Activated T-helper 1 cell treated with anti-CD3 and anti-CD28 coated beads, Interleukin-12 subunit alpha, Interleukin-12 subunit beta, Interleukin-2, Interleukin-4 antibody, amounts not matched to agents 30 ng/mL and 10 ng/mL and 1 ng/mL, durations not matched to agents 14 hours and 24 hours and 36 hours (primary cell): ENCODE measurements at regions of chr6 and their contacts with region 1.

Region 1: DNA sequence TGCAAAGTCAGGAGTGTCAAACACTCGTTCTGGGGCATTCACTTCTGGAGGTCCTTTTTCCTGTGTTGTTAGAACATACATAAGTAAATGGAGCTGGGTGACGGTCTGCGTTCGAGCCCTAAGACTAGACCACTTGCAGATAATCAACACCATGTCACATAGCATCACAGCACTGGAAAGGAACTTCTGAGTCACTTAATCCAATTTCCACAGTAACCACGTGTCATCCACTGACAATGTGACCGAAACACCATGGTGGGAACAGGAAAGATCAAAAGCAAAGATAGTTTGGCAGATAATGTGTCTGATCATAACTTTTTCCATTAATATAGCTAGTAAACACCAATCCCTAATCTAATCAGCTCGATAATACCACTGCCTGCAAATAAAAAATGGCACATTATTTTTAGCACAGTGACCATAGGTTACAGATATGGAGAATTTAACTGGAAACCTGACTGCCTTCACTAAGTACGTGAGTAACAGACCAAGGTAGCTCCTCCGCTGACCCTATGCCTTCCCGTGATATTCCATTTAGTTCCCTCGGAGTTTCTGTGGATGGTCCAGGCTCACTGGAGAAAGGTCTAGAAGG is 34.8 kb downstream of the WRNIP1 start:
- DNase-seq: no peak
- H3K4me3 Mint-ChIP-seq: no peak overlapping the region
- H3K27ac Mint-ChIP-seq: peak overlapping the region; percentile 62
- H3K4me1 Mint-ChIP-seq: peaks cover 44% of the 10 kb centered on the region
- H3K27me3 Mint-ChIP-seq: no peaks in the 10 kb centered on the region

Region 2: DNA sequence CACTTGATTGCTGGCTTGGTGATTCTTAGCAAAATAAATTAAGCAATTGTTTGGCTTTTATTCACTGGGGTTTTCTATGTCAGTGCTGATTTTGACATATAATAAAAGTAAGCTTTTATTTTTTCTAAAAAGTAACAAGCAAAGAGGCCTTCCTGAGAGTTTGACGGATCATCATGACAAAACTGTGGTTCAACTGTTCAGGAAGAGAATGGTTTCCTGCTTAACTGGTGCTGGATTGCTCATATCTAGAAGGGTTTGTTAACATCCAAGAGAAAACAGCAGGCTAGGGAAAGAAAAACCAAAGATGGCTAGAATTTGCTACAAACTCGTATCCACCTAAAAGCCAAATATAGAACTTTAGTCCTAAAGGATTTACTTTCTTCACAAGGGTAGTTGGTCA is 20.4 kb after region 1 on chr6:
- intact Hi-C with region 1: loop called (anchors 2 kb)
- DNase-seq: no peak
- H3K4me3 Mint-ChIP-seq: peak overlapping the region; percentile 20
- H3K27ac Mint-ChIP-seq: peak overlapping the region; percentile 71
- H3K4me1 Mint-ChIP-seq: peaks cover 48% of the 10 kb centered on the region
- H3K27me3 Mint-ChIP-seq: no peaks in the 10 kb centered on the region